ENCODE measurements at regions of chr6 and their contacts with region 1.

Region 1: DNA sequence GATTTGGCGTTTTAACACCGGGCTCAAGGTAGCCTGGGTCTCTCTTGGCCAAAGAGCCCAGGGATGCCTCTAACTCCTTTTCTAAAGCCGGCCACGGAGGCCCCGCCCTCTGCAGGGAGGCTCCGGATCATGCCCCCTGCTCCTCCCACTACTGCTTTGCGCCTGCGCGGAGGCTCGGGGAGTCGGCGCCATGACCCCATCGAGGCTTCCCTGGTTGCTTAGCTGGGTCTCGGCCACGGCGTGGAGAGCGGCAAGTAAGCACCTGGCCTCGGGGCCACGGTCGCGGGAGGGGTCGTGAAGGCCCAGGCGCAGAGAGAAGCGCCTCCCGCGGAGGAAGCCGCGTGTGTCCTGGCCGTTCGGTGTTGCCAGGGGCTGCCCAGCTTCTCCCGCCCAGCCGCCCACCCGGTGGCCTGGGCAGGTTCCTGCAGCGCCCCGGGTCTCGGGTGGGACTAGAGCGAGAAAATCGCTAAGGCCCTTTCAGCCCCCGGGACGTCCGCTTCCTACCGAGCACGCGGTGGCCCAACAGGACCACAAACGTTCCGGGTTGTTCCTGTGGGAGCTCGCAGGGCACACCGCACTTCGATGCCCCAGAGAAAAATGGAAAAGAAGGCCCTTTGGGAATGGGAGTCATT is at the start of gene SDHAF4:
- DNase-seq: peak; percentile 91 to 95 (median 93)
- H3K4me3 ChIP-seq: peak within 1 kb of the TSS; percentile 82
- H3K27ac ChIP-seq: peak within 1 kb of the TSS; percentile 85 to 89
- H3K4me1 ChIP-seq: no peaks in the 10 kb centered on the region
- H3K27me3 ChIP-seq: no peaks in the 10 kb centered on the region
- CTCF ChIP-seq: no peak
- EP300 ChIP-seq: no peak
- POLR2A ChIP-seq: peak; percentile 56
- total RNA-seq, gene SDHAF4: 6.1 to 11.3 (median 8.5) TPM

Region 2: DNA sequence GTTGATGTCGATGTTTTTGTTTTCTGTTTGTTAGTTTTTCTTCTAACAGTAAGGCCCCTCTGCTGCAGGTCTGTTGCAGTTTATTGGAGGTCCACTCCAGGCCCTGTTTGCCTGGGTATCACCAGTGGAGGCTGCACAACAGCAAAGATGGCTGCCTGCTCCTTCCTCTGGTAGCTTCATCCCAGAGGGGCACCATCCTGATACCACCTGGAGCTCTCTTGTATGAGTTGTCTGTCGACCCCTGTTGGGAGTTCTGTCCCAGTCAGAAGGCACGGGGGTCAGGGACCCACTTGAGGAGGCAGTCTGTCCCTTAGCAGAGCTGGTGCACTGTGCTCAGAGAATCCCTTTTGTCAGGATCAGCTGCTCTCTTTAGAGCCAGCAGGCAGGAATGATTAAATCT is 66.2 kb before region 1 on chr6:
- intact Hi-C with region 1: no loop called
- DNase-seq: no peak
- H3K4me3 ChIP-seq: no peak overlapping the region
- H3K27ac ChIP-seq: no peak overlapping the region
- H3K4me1 ChIP-seq: no peaks in the 10 kb centered on the region
- H3K27me3 ChIP-seq: no peaks in the 10 kb centered on the region
- CTCF ChIP-seq: no peak
- EP300 ChIP-seq: no peak
- POLR2A ChIP-seq: no peak

Region 3: GRCh38 chr6:70629929-70630328 is 63.1 kb after region 1 on chr6:
- intact Hi-C with region 1: no loop called
- DNase-seq: no peak
- H3K4me3 ChIP-seq: no peak overlapping the region
- H3K27ac ChIP-seq: no peak overlapping the region
- H3K4me1 ChIP-seq: no peaks in the 10 kb centered on the region
- H3K27me3 ChIP-seq: no peaks in the 10 kb centered on the region
- CTCF ChIP-seq: no peak
- EP300 ChIP-seq: no peak
- POLR2A ChIP-seq: no peak

Region 4: DNA sequence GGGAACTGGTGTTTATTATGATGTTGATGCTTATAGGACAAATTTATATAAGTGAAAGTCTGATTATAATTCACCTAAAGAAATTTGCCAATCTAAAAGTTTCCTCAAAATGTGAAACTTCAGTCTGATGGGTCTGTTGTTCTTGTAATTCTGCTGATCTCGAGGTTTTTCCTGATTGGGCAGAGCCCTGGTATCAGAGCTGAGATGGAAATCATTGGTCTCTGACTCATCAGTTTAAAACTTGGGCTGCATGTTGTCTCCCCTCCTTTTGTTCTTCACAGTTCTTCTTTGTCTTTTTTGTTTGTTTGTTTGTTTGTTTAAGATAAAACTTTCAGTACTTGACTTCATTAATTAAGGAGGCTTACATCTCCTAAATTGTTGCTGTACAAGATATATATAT is 106.7 kb after region 1 on chr6:
- intact Hi-C with region 1: loop called in 1 of 4 experiments (anchors 10 kb)
- DNase-seq: no peak
- H3K4me3 ChIP-seq: no peak overlapping the region
- H3K27ac ChIP-seq: no peak overlapping the region
- H3K4me1 ChIP-seq: peaks cover 4% of the 10 kb centered on the region
- H3K27me3 ChIP-seq: no peaks in the 10 kb centered on the region
- CTCF ChIP-seq: no peak
- EP300 ChIP-seq: no peak
- POLR2A ChIP-seq: no peak

Region 5: DNA sequence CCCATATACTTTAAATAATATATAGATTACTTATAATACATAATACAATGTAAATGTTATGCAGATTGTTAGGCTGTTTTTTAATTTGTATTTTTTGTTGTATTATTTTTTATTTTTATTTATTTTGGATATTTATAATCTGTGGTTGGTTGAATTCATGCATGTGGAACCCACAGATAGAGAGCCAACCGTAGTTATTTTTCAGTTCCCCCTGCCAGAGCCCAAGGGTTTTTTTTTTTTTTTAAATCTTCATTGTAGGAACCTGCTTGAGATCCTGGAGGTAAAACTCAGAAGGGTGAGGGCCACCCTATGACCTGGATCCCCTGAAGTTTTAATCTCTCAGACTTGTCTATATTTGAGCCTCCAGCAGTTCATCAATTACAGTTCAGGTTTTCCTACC is 256.8 kb after region 1 on chr6:
- intact Hi-C with region 1: no loop called
- DNase-seq: no peak
- H3K4me3 ChIP-seq: no peak overlapping the region
- H3K27ac ChIP-seq: no peak overlapping the region
- H3K4me1 ChIP-seq: no peaks in the 10 kb centered on the region
- H3K27me3 ChIP-seq: no peaks in the 10 kb centered on the region
- CTCF ChIP-seq: no peak
- EP300 ChIP-seq: no peak
- POLR2A ChIP-seq: no peak